ENCODE measurements at regions of chr2 and their contacts with region 1.

Region 1: DNA sequence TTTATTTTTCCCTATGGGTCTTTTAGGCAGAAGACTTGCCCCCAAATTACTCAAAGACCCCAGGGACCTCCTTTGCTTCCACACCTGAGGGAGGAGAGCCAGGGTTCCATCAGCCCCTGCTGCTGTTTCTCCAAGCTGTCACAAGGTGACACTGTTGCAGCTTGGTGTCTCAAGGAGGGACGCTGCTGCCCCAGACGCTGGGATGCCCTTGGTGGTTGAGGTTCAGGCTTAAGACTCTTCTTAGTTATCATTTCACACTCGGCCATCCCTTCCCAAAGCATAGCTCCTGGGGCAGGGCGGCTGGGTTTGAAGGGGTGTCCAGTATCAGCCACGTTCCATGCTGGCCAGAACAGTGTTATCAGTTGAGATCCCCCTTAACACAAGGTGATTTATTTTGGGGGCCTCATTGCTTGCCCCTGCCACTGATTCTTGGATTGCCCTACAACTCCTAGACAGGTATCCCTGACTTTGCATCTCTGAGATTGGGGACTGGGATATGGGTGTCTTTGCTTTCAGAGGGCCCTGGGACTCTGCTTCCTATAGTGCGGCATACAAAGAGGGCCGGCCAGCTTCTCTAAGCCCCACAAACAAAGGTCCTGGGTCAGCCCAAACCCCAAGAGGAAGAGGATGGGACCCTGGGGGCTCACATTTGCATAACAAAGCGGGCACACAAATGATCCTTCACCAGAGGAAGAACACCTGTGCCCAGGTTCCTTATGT is 22.7 kb downstream of the GPR55 start:
- DNase-seq: peak; percentile 62
- H3K4me3 Mint-ChIP-seq: no peak overlapping the region
- H3K27ac Mint-ChIP-seq: no peak overlapping the region
- H3K4me1 Mint-ChIP-seq: peaks cover 23% of the 10 kb centered on the region
- H3K27me3 Mint-ChIP-seq: peaks cover 48% of the 10 kb centered on the region

Region 2: GRCh38 chr2:230913406-230914143 is 11.2 kb after region 1 on chr2:
- CTCF ChIA-PET with region 1: interaction called, 13 read pairs
- DNase-seq: peak; percentile 39
- H3K4me3 Mint-ChIP-seq: no peak overlapping the region
- H3K27ac Mint-ChIP-seq: no peak overlapping the region
- H3K4me1 Mint-ChIP-seq: peaks cover 10% of the 10 kb centered on the region
- H3K27me3 Mint-ChIP-seq: peaks cover 23% of the 10 kb centered on the region

Region 3: DNA sequence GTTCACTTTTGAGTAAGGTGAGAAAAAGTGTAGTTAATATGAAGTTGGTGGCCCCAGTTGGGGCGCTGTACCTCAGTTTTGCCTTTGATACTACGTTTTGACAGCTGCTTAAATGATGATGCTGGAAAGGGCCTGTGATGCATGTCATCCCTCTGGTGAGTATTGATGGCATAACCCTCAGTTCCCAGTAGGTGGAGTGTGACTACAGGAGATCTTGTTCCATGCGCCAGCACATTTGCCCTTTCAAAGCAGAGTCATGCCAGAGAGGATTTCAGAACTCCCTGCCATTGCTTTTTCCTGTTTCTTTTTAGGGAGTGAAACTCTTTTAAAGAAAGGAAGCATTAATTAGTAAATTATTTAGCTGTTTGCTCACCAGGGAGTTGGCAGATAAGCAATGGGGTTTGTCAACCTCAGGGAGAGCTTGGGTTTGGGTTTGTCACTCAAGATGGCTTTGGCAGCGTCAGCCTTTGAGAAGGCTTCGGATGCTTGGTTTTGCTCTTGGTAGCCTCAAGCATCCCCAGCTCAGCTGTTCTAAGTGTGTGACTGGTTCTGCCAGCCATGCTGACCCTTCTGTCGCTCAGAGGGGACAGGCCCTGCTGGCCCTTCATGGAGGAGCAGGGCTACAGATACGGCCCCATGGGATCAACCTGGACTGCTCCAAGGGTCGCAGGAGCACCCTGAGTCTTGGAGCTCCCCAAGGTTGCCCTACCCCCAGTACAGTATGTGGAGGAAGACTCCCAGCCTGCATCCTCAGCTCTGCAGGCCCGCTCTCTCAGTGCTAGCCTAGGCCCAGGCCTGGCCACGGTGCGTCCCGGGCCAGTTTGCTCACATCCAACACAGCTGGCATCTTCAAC is 325.2 kb after region 1 on chr2:
- CTCF ChIA-PET with region 1: no interaction called
- DNase-seq: peak; percentile 64
- H3K4me3 Mint-ChIP-seq: no peak overlapping the region
- H3K27ac Mint-ChIP-seq: no peak overlapping the region
- H3K4me1 Mint-ChIP-seq: no peaks in the 10 kb centered on the region
- H3K27me3 Mint-ChIP-seq: no peaks in the 10 kb centered on the region